ENCODE measurements at regions of chr3 and their contacts with region 1.

Region 1: GRCh38 chr3:171491361-171491760 is 31.2 kb upstream of the TNIK start:
- DNase-seq: no peak
- H3K4me3 Mint-ChIP-seq: peak overlapping the region; percentile 71
- H3K27ac Mint-ChIP-seq: peak overlapping the region; percentile 67
- H3K4me1 Mint-ChIP-seq: peaks cover 55% of the 10 kb centered on the region
- H3K27me3 Mint-ChIP-seq: no peaks in the 10 kb centered on the region

Region 2: GRCh38 chr3:170992854-170993253 is 498.5 kb before region 1 on chr3:
- intact Hi-C with region 1: no loop called
- DNase-seq: no peak
- H3K4me3 Mint-ChIP-seq: no peak overlapping the region
- H3K27ac Mint-ChIP-seq: no peak overlapping the region
- H3K4me1 Mint-ChIP-seq: no peaks in the 10 kb centered on the region
- H3K27me3 Mint-ChIP-seq: peaks cover 11% of the 10 kb centered on the region

Region 3: DNA sequence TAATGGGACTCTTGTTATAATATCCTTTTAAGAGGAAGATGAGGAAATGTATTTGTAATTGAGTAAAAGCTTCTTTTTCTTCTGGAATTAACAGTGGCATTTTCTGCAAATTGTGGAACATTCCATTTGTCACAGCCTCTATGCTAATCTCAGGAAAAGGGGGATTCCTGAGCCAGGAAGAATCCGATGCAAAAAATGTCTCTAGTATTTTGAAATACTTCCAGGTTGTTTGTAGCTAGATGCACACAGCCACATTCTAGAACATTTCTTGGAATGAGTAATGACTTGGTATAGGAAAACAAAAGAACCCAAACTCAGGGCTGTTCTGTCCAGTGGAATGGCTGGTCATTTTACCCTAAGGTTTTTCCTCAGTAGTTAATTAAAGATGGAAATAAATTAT is 366.4 kb before region 1 on chr3:
- intact Hi-C with region 1: no loop called
- DNase-seq: no peak
- H3K4me3 Mint-ChIP-seq: no peak overlapping the region
- H3K27ac Mint-ChIP-seq: no peak overlapping the region
- H3K4me1 Mint-ChIP-seq: no peaks in the 10 kb centered on the region
- H3K27me3 Mint-ChIP-seq: no peaks in the 10 kb centered on the region

Region 4: DNA sequence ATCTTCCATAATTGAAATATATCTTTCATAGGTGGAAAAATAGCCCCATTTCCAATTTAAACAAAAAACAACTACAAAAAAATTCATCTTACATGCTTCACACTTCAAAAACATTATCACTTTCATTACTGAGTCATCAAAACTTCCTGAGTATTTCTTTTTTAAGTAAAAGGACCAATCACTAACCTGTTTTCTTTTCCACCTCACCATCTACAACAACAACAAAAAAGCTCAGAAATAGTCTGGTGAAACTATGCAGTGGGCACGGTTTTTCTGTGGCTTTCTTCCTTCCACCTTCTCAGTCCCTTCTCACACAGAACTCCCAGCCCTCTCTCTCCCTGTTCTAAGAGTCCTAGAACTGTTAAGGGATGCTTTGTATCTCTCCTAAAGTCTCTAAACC is 10.8 kb before region 1 on chr3:
- intact Hi-C with region 1: loop called (anchors 1 kb)
- DNase-seq: peak; percentile 30
- H3K4me3 Mint-ChIP-seq: peak overlapping the region; percentile 2
- H3K27ac Mint-ChIP-seq: peak overlapping the region; percentile 76
- H3K4me1 Mint-ChIP-seq: peaks cover 14% of the 10 kb centered on the region
- H3K27me3 Mint-ChIP-seq: no peaks in the 10 kb centered on the region

Region 5: GRCh38 chr3:171561596-171562323 is 70.4 kb after region 1 on chr3:
- intact Hi-C with region 1: loop called (anchors 1 kb)
- DNase-seq: no peak
- H3K4me3 Mint-ChIP-seq: peak overlapping the region; percentile 50
- H3K27ac Mint-ChIP-seq: peak overlapping the region; percentile 92
- H3K4me1 Mint-ChIP-seq: peaks cover 66% of the 10 kb centered on the region
- H3K27me3 Mint-ChIP-seq: no peaks in the 10 kb centered on the region